ENCODE measurements at regions of chr5 and their contacts with region 1.

Region 1: GRCh38 chr5:180071531-180072255 is at the start of gene RNF130:
- DNase-seq: peak; percentile 92
- H3K4me3 ChIP-seq: peak within 1 kb of the TSS; percentile 86 to 89 (median 87)
- H3K27ac ChIP-seq: peak within 1 kb of the TSS; percentile 71
- H3K4me1 ChIP-seq: peaks cover 8% of the 10 kb centered on the region
- H3K27me3 ChIP-seq: peaks cover 0 to 5% of the 10 kb centered on the region in 2 experiments
- CTCF ChIP-seq: no peak
- POLR2A ChIP-seq: peak; percentile 54
- total RNA-seq, gene RNF130: 43.0 and 44.0 TPM in 2 replicates

Region 2: DNA sequence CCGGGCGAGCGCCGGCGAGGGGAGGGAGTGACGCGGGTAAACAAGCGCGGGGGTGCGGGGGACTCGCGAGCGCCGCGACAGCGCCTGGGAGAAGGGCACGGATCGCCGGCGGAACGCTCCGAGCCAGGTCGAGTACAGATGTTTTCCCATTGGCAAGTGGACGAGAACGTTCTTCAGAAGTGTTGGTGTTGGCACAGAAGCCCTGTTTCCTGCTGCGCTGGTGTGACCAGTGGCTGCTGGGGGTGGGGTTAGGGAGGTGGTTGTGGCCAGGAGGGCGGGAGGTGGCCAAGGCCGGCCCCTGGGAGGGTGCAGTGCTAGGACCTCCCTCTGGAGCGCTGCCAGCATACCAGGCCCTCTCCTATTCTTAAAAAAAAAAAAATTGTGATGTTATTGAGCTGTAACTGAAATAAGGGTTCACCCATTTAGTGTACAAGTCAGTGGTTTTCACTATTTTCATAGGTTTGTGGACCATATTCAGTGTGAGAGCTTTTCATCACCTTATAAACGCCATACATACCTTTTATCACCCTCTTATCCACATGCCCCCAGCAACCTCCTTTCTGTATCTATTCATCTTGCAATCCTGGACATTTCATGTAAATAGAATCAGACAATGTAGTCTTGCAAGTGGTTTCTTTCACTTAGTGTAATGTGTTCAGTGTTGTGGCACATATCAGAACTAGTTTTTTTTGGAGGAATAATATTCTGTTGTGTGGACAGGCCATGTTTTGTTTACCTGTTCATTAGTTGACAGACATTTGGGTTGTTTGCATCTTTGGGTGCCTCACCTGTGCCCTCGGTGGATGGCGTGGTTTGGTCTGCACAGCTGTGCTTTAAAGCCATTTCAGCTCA is 249.9 kb before region 1 on chr5:
- CTCF ChIA-PET with region 1: no interaction called
- POLR2A ChIA-PET with region 1: no interaction called
- dilution Hi-C with region 1: no loop called
- intact Hi-C with region 1: loop called (anchors 5 kb)
- DNase-seq: peak; percentile 93
- H3K4me3 ChIP-seq: peak overlapping the region; percentile 49 to 90 (median 82)
- H3K27ac ChIP-seq: peak overlapping the region; percentile 96
- H3K4me1 ChIP-seq: peaks cover 37% of the 10 kb centered on the region
- H3K27me3 ChIP-seq: no peaks in the 10 kb centered on the region
- CTCF ChIP-seq: no peak
- POLR2A ChIP-seq: peak; percentile 85

Region 3: GRCh38 chr5:179907570-179908324 is 163.9 kb before region 1 on chr5 and contains the start of gene TBC1D9B:
- CTCF ChIA-PET with region 1: no interaction called
- POLR2A ChIA-PET with region 1: no interaction called
- dilution Hi-C with region 1: no loop called
- intact Hi-C with region 1: loop called (anchors 2 kb)
- DNase-seq: peak; percentile 45
- H3K4me3 ChIP-seq: peak within 1 kb of the TSS; percentile 36 to 51 (median 48)
- H3K27ac ChIP-seq: no peak within 1 kb of the TSS
- H3K4me1 ChIP-seq: peaks cover 29% of the 10 kb centered on the region
- H3K27me3 ChIP-seq: no peaks in the 10 kb centered on the region
- CTCF ChIP-seq: peak; percentile 15 to 23
- POLR2A ChIP-seq: peak; percentile 80
- total RNA-seq, gene TBC1D9B: 120 and 150 TPM in 2 replicates

Region 4: GRCh38 chr5:179998485-179998884 is 73.2 kb before region 1 on chr5:
- CTCF ChIA-PET with region 1: no interaction called
- POLR2A ChIA-PET with region 1: no interaction called
- dilution Hi-C with region 1: no loop called
- intact Hi-C with region 1: no loop called
- DNase-seq: no peak
- H3K4me3 ChIP-seq: no peak overlapping the region
- H3K27ac ChIP-seq: no peak overlapping the region
- H3K4me1 ChIP-seq: no peaks in the 10 kb centered on the region
- H3K27me3 ChIP-seq: no peaks in the 10 kb centered on the region
- CTCF ChIP-seq: no peak
- POLR2A ChIP-seq: no peak

Region 5: GRCh38 chr5:180026320-180026719 is 45.4 kb before region 1 on chr5:
- CTCF ChIA-PET with region 1: no interaction called
- POLR2A ChIA-PET with region 1: no interaction called
- dilution Hi-C with region 1: no loop called
- intact Hi-C with region 1: loop called (anchors 1 kb)
- DNase-seq: peak; percentile 89
- H3K4me3 ChIP-seq: no peak overlapping the region
- H3K27ac ChIP-seq: peak overlapping the region; percentile 14
- H3K4me1 ChIP-seq: peaks cover 20% of the 10 kb centered on the region
- H3K27me3 ChIP-seq: no peaks in the 10 kb centered on the region
- CTCF ChIP-seq: no peak
- POLR2A ChIP-seq: no peak

Region 6: DNA sequence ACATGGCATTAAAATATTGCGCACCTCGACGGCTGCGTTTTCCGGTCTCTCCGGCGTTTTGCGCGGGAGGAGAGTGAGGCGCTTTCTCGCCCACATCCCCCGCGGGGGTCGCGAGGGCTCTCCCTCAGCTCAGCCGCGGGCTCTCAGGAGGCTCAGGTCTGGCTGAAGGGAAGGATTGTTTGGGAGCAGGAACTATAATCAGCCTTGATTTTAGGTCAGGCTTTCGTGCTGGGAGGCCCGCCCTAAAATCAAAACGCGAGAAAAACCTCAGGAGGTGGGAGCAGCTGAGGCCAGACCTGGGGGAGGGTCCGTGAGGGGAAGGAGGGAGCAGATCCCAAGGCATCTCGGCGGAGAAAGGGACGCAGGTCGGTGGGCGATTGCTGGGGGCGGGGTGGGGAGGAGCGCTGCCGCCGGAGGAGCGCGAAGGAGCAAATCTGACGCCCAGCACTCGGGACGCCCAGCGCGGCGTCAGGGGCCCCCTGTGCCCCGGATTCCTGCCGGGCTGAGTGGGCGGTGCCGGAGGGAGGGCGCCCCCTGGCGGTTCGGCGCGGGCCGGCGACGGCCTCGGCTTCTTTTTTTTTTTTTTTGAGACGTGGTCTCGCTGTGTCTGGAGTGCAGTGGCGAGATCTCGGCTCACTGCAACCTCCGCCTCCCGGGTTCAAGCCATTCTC is 18.5 kb after region 1 on chr5:
- CTCF ChIA-PET with region 1: interaction called, 5 read pairs
- POLR2A ChIA-PET with region 1: no interaction called
- dilution Hi-C with region 1: no loop called
- intact Hi-C with region 1: loop called (anchors 1 kb)
- DNase-seq: peak; percentile 77
- H3K4me3 ChIP-seq: peak overlapping the region; percentile 41 to 76 (median 72)
- H3K27ac ChIP-seq: peak overlapping the region; percentile 49
- H3K4me1 ChIP-seq: peaks cover 4% of the 10 kb centered on the region
- H3K27me3 ChIP-seq: peaks cover 1 to 4% of the 10 kb centered on the region in 2 experiments
- CTCF ChIP-seq: peak; percentile 79 to 85
- POLR2A ChIP-seq: no peak